GM12878 (cell line): ENCODE measurements at regions of chr19 and their contacts with region 1.

Region 1: DNA sequence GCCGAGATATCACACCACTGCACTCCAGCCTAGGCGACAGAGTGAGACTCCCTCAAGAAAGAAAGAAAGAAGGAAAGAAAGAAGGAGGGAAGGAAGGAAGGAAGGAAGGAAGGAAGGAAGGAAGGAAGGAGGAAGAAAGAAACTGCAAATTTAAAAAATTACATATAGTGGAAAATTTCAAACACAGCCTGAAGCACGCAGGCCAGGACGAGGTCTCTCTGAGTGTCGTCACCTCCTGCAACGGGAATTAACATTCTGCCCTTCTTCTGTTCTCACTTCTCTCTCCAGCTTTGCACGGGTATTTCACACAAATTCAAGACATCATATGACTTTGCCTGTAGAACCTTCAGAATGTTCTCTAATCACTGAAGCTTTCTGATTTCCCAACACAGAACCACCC is 108.2 kb downstream of the GNG7 start:
- DNase-seq: peak; percentile 60
- ATAC-seq: peak; percentile 4; the same call in 1 of the 3 replicates
- H3K4me3 ChIP-seq: no peak overlapping the region
- H3K27ac ChIP-seq: peak overlapping the region; percentile 49
- H3K4me1 ChIP-seq: peaks cover 23% of the 10 kb centered on the region
- H3K27me3 ChIP-seq: no peaks in the 10 kb centered on the region
- CTCF ChIP-seq: no peak
- EP300 ChIP-seq: peak; percentile 53 to 66; a peak in 2 of 4 replicates
- POLR2A ChIP-seq: no peak
- RAD21 ChIP-seq: no peak

Region 2: DNA sequence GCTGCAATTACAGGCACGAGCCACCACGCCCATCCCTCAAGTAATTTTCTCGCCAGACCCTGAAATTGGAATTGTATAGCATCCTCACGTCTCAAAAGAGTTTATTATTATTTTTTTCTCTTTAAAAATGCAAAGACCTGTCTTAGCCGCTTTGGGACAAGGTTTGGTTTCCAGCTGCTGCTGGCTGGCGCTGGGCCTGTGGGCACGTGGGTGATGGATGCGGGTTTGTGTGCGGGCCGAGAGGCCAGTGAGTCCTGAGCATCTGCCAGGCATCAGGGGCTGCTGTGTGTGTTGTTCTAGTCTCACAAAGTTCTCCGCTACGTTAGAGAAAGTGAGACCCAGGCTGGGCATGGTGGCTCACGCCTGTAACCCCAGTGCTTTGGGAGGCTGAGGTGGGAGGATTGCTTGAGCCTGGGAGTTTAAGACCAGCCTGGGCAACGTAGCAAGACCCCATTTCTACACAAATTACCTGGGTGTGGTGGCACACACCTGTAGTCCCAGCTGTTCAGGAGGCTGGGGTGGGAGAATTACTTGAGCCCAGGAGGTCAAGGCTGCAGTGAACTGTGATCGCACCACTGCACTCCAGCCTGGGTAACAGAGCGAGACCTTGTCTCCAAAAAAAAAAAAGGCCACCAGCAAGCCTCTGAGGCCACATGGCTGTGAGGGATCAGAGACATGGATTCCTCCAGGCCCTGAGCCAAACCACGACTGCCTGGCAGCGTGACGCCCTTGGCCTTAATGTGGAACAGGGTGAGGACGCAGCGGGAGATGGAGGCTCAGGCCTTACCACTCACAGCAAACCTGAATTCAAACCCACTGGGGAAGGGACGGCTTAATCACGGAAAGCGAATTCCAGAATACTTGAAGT is 238.9 kb before region 1 on chr19:
- CTCF ChIA-PET with region 1: no interaction called
- POLR2A ChIA-PET with region 1: no interaction called
- RAD21 ChIA-PET with region 1: no interaction called
- SMC1A ChIA-PET with region 1: no interaction called
- in situ Hi-C with region 1: no loop called
- intact Hi-C with region 1: no loop called
- DNase-seq: no peak
- ATAC-seq: no peak
- H3K4me3 ChIP-seq: no peak overlapping the region
- H3K27ac ChIP-seq: no peak overlapping the region
- H3K4me1 ChIP-seq: no peaks in the 10 kb centered on the region
- H3K27me3 ChIP-seq: no peaks in the 10 kb centered on the region
- CTCF ChIP-seq: no peak
- EP300 ChIP-seq: no peak
- POLR2A ChIP-seq: no peak
- RAD21 ChIP-seq: no peak

Region 3: DNA sequence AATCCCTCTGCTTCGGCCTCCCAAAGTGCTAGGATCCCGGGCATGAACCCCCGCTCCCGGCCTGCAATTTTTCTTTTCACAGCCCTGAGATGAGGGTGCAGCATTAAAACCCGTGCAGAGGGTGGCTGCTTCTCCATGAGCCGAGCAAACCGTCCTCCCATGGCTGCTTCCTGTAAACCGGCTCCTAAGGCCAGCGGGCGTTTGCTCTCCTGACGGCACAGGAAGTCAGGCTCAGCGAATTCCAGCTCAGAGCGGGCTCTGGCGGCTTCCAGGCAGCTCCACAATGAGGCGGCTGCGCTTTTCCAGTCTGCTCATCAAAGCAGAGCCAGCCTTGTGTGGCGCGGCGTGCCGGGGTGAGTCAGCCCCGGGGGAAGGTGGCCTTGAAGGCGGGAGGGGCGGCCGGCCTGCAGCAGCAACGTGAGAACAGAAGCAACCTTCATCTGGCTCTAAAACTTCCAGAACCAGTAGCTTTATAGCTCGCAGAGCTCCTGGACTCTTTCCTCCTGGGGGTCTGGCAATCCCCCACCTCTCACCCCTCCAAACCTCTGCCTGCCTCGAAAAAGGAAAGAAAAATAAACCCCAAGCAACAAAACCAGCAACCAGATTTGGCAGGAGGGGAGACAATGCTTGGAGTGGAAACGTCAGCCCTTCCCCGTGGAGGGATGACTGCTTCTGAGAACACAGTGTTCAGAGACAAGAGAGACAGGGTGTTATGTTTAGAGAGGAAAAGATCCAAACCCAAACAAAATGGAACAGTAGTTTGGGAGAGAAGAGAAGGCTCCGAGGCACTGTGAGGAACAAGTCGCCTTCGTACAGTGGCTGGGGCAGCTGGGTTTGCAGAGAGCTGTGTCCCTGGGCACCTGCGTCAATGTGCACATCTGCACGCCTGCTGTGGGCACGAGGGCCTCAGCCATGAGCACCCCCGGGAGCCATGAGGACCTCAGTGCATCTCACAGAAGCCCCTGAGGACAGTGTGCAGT is 50.6 kb before region 1 on chr19:
- CTCF ChIA-PET with region 1: interaction called, 3 read pairs
- POLR2A ChIA-PET with region 1: interaction called, 10 read pairs
- RAD21 ChIA-PET with region 1: interaction called, 13 read pairs
- SMC1A ChIA-PET with region 1: interaction called, 7 read pairs
- in situ Hi-C with region 1: no loop called
- intact Hi-C with region 1: no loop called
- DNase-seq: no peak
- ATAC-seq: peak; percentile 82
- H3K4me3 ChIP-seq: peak overlapping the region; percentile 53
- H3K27ac ChIP-seq: peak overlapping the region; percentile 64
- H3K4me1 ChIP-seq: peaks cover 35% of the 10 kb centered on the region
- H3K27me3 ChIP-seq: no peaks in the 10 kb centered on the region
- CTCF ChIP-seq: peak in 1 of 3 experiments; percentile 18; a peak in 1 of 6 replicates
- EP300 ChIP-seq: no peak
- POLR2A ChIP-seq: peak; percentile 41; the same call in 1 of the 2 replicates
- RAD21 ChIP-seq: 0 out of 2 replicates have a peak, but pooled peaks have one; percentile 3

Region 4: GRCh38 chr19:2552859-2553258 is 41.5 kb before region 1 on chr19:
- CTCF ChIA-PET with region 1: interaction called, 3 read pairs
- POLR2A ChIA-PET with region 1: interaction called, 10 read pairs
- RAD21 ChIA-PET with region 1: interaction called, 43 read pairs
- SMC1A ChIA-PET with region 1: interaction called, 3 read pairs
- in situ Hi-C with region 1: no loop called
- intact Hi-C with region 1: no loop called
- DNase-seq: peak; percentile 86
- ATAC-seq: peak; percentile 94
- H3K4me3 ChIP-seq: peak overlapping the region; percentile 20; the same call in 1 of the 2 replicates
- H3K27ac ChIP-seq: peak overlapping the region; percentile 55
- H3K4me1 ChIP-seq: peaks cover 11% of the 10 kb centered on the region
- H3K27me3 ChIP-seq: no peaks in the 10 kb centered on the region
- CTCF ChIP-seq: no peak
- EP300 ChIP-seq: peak in 1 of 2 experiments; percentile 77; a peak in 1 of 4 replicates
- POLR2A ChIP-seq: no peak
- RAD21 ChIP-seq: 0 out of 2 replicates have a peak, but pooled peaks have one; percentile 5

Region 5: DNA sequence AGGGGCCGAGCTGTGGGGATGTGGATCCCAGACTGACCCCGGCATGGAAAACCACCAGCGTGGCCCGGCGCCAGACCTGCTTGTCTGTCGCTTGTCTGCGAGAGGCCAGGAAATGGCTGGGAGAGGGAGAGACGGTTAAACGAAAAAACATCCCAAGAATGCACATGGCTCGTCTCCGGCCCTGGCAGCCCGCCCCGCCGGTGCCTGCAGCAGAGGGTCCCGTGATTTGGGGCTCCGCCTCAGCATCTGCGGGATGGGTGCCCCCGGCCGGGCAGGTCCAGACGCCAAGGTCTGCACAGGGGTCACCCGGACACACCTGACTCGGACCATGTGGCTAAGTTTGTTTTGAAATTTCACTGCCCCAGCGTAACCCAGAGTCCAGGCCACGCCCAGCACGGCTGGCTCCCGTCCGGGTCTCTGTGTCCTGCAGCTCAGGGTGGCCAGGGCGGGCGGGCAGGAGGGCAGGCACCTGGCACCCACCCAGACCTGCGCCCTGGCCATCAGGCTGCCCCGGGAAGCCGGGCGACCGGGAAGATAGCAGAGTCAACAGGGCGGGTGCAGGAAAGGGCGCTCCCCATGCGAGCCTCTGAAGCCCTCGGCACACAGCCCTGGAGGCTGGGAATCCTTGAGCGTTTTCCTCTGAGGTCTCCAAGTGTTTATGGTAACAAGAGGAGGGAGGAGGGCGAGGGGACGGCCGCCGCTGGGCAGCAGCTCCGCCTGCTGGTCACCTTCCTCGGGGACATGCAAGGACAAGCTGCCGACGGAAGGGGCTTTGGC is 15.2 kb before region 1 on chr19:
- CTCF ChIA-PET with region 1: interaction called, 24 read pairs
- POLR2A ChIA-PET with region 1: interaction called, 4 read pairs
- RAD21 ChIA-PET with region 1: interaction called, 12 read pairs
- SMC1A ChIA-PET with region 1: interaction called, 12 read pairs
- in situ Hi-C with region 1: no loop called
- intact Hi-C with region 1: no loop called
- DNase-seq: no peak
- ATAC-seq: peak; percentile 90
- H3K4me3 ChIP-seq: no peak overlapping the region
- H3K27ac ChIP-seq: no peak overlapping the region
- H3K4me1 ChIP-seq: peaks cover 7% of the 10 kb centered on the region; the same call in 1 of the 2 replicates
- H3K27me3 ChIP-seq: no peaks in the 10 kb centered on the region
- CTCF ChIP-seq: peak; percentile 43 to 79 (median 72); a peak in 5 of 6 replicates
- EP300 ChIP-seq: no peak
- POLR2A ChIP-seq: no peak
- RAD21 ChIP-seq: peak; percentile 78